Psoas muscle (tissue), 8 donors: ENCODE measurements at regions of chr4 and their contacts with region 1.

Region 1: GRCh38 chr4:94390804-94391410 is 48.3 kb upstream of the HPGDS start:
- DNase-seq: no peak
- ATAC-seq: no peak
- H3K4me3 ChIP-seq: no peak overlapping the region
- H3K27ac ChIP-seq: no peak overlapping the region
- H3K4me1 ChIP-seq: no peaks in the 10 kb centered on the region
- H3K27me3 ChIP-seq: peaks cover 0 to 6% (median 0%) of the 10 kb centered on the region in 3 donors
- CTCF ChIP-seq: peak; percentile 34

Region 2: DNA sequence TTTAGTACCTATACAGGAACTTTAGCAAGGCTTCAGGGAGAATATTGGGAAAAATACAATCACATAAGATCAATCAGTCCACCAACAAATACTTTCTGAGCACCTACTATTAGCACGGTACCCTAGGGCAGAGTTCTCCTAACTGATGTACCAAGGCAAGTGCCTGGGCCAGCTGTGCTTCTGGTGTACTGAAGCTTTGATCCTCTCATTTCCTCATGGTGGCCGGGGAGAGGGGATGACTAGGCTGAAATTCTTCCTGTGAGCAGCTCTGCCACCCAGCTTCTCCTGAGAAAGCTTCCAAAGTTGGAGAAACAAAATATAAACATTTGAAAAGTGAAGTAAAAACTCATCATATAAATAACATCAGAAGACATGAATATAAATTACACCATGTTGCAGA is 611.7 kb before region 1 on chr4:
- intact Hi-C with region 1: no loop called
- DNase-seq: no peak
- ATAC-seq: no peak
- H3K4me3 ChIP-seq: no peak overlapping the region
- H3K27ac ChIP-seq: no peak overlapping the region
- H3K4me1 ChIP-seq: no peaks in the 10 kb centered on the region
- H3K27me3 ChIP-seq: no peaks in the 10 kb centered on the region
- CTCF ChIP-seq: no peak

Region 3: GRCh38 chr4:93791570-93792195 is 599.2 kb before region 1 on chr4:
- intact Hi-C with region 1: loop called in 1 of 2 experiments (anchors 10 kb)
- DNase-seq: peak in 1 of 2 donors; percentile 17
- ATAC-seq: peak in 3 of 4 donors; percentile 47 to 55 (median 54)
- H3K4me3 ChIP-seq: no peak overlapping the region
- H3K27ac ChIP-seq: no peak overlapping the region
- H3K4me1 ChIP-seq: no peaks in the 10 kb centered on the region
- H3K27me3 ChIP-seq: peaks cover 0 to 2% (median 0%) of the 10 kb centered on the region in 3 donors
- CTCF ChIP-seq: peak; percentile 74

Region 4: GRCh38 chr4:94304365-94304971 is 86.4 kb before region 1 on chr4:
- intact Hi-C with region 1: loop called in 1 of 2 experiments (anchors 10 kb)
- DNase-seq: no peak
- ATAC-seq: peak in 1 of 4 donors; percentile 68
- H3K4me3 ChIP-seq: no peak overlapping the region
- H3K27ac ChIP-seq: no peak overlapping the region
- H3K4me1 ChIP-seq: peaks cover 8% of the 10 kb centered on the region
- H3K27me3 ChIP-seq: no peaks in the 10 kb centered on the region
- CTCF ChIP-seq: peak; percentile 66

Region 5: DNA sequence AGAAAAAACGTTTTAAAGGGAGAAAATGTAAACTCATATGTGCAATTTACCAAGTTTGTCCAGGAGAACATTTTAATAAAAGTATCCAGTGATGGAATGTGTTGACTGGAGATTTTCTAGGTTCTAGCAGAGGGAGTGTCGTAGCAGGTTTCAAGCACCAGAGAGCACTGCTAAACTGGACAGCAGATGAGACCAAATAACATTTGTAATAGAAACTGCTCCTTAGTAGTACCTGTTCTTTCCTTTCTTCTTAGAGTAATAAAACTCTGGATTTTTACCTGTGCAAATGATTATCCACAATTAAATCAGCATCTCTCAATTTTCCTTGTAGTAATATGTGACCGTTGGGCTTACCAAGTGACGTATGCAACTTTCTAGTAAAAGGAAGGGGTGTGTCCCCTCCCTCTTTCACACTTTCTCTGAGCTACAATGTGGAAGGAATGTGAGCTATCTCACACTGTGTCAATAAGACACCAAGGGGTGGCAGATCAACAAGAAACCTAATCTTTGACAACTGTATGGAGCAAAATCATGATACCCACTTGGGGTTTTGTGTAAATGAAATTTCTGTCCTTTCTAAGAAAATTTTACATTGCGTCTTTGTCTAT is 57.8 kb before region 1 on chr4:
- intact Hi-C with region 1: loop called in 1 of 2 experiments (anchors 10 kb)
- DNase-seq: no peak
- ATAC-seq: peak in 3 of 4 donors; percentile 57 to 80 (median 71)
- H3K4me3 ChIP-seq: no peak overlapping the region
- H3K27ac ChIP-seq: no peak overlapping the region
- H3K4me1 ChIP-seq: no peaks in the 10 kb centered on the region
- H3K27me3 ChIP-seq: no peaks in the 10 kb centered on the region
- CTCF ChIP-seq: peak; percentile 45

Region 6: GRCh38 chr4:94354474-94354896 is 36.4 kb before region 1 on chr4:
- intact Hi-C with region 1: loop called in 1 of 2 experiments (anchors 5 kb)
- DNase-seq: no peak
- ATAC-seq: no peak
- H3K4me3 ChIP-seq: no peak overlapping the region
- H3K27ac ChIP-seq: no peak overlapping the region
- H3K4me1 ChIP-seq: no peaks in the 10 kb centered on the region
- H3K27me3 ChIP-seq: no peaks in the 10 kb centered on the region
- CTCF ChIP-seq: no peak